Caco-2 (cell line): ENCODE measurements at regions of chr4 and their contacts with region 1.

Region 1: GRCh38 chr4:39004758-39005157 is 27.5 kb downstream of the TMEM156 start:
- DNase-seq: no peak
- H3K4me3 ChIP-seq: no peak overlapping the region
- H3K4me3 Mint-ChIP-seq: no peak overlapping the region
- H3K27ac Mint-ChIP-seq: no peak overlapping the region
- H3K4me1 ChIP-seq: no peaks in the 10 kb centered on the region
- H3K4me1 Mint-ChIP-seq: no peaks in the 10 kb centered on the region
- H3K27me3 ChIP-seq: no peaks in the 10 kb centered on the region
- H3K27me3 Mint-ChIP-seq: no peaks in the 10 kb centered on the region
- CTCF ChIP-seq: no peak

Region 2: GRCh38 chr4:38411092-38411491 is 593.7 kb before region 1 on chr4:
- CTCF ChIA-PET with region 1: no interaction called
- POLR2A ChIA-PET with region 1: no interaction called
- intact Hi-C with region 1: loop called (anchors 5 kb)
- DNase-seq: no peak
- H3K4me3 ChIP-seq: no peak overlapping the region
- H3K4me3 Mint-ChIP-seq: no peak overlapping the region
- H3K27ac Mint-ChIP-seq: no peak overlapping the region
- H3K4me1 ChIP-seq: peaks cover 15% of the 10 kb centered on the region
- H3K4me1 Mint-ChIP-seq: peaks cover 12% of the 10 kb centered on the region
- H3K27me3 ChIP-seq: no peaks in the 10 kb centered on the region
- H3K27me3 Mint-ChIP-seq: no peaks in the 10 kb centered on the region
- CTCF ChIP-seq: no peak